ENCODE measurements at regions of chr9 and their contacts with region 1.

Region 1: DNA sequence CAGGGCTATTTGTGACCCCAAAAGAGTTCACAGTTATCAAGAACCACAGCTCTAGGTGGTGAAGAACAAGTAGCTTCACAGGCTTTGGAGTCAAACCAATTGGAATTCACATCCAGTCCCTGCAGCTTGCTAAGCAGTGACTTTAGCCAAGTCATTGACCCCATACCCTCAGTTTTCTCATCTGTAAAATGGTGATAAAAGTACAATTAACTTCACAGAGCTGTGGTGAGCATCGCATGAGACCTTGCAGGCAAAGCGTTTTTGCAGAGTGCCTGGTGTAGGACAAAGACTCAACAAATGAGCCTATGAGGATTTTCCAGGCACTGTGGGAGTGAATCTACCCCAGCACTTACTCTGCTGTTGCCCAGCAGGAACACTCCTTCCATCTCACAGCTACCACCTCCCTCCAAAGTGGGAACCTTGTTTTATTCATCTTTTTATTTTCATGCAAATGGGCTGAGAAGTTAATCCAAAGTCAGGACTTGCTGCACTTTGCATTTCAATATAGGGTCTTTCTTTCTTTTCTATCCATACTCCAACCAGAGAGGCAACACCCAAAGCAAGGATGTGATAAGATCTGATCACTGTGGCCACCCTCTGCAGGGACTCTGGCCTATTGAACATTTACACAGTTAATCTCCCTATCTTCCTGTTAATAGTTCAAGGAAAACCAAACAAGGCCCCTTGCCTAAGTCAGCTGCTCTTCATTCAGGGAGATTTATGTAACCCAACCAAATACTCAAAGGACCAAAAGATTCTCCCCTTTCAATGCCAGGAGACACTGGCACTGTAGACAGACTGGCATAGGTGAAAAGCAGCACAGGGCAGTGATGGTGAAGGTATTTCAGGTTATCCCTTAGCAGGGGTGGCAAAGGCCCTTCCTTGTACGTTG is 41.9 kb downstream of the ABCA1 start:
- DNase-seq: peak; percentile 66 to 67
- H3K4me3 ChIP-seq: no peak overlapping the region
- H3K4me3 Mint-ChIP-seq: peak overlapping the region; percentile 56
- H3K27ac Mint-ChIP-seq: peak overlapping the region; percentile 58
- H3K4me1 ChIP-seq: peaks cover 48% of the 10 kb centered on the region
- H3K4me1 Mint-ChIP-seq: peaks cover 31% of the 10 kb centered on the region
- H3K27me3 ChIP-seq: no peaks in the 10 kb centered on the region
- H3K27me3 Mint-ChIP-seq: no peaks in the 10 kb centered on the region
- CTCF ChIP-seq: no peak

Region 2: GRCh38 chr9:104686081-104686480 is 200.0 kb before region 1 on chr9:
- CTCF ChIA-PET with region 1: no interaction called
- POLR2A ChIA-PET with region 1: no interaction called
- intact Hi-C with region 1: no loop called
- DNase-seq: no peak
- H3K4me3 ChIP-seq: no peak overlapping the region
- H3K4me3 Mint-ChIP-seq: no peak overlapping the region
- H3K27ac Mint-ChIP-seq: no peak overlapping the region
- H3K4me1 ChIP-seq: no peaks in the 10 kb centered on the region; the same call in 1 of the 2 replicates
- H3K4me1 Mint-ChIP-seq: no peaks in the 10 kb centered on the region
- H3K27me3 ChIP-seq: no peaks in the 10 kb centered on the region
- H3K27me3 Mint-ChIP-seq: no peaks in the 10 kb centered on the region
- CTCF ChIP-seq: no peak

Region 3: DNA sequence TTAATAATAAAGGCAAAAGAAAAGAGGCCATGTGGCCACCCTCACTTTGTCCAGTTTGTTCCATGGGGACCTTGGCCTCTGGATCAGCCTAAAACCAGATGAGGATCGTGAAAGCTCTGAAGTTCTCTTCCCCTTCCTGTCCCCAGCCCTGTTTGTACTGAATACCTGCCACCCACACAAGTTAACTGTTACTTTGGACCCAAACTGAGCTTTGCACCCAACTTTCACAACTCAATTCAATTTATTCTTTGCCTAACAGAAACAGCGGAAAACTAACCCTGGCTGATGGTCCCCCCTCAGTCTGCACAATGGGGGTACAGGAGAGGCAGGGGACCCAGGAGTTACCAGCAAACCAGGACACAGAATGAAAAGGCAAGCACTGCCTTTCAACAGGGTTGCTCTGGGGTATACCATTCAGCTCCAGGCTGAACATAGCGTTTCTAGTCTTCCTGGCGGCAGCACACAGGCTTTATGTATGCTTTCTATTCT is 13.7 kb after region 1 on chr9:
- CTCF ChIA-PET with region 1: no interaction called
- POLR2A ChIA-PET with region 1: no interaction called
- intact Hi-C with region 1: loop called (anchors 1 kb)
- DNase-seq: no peak
- H3K4me3 ChIP-seq: no peak overlapping the region
- H3K4me3 Mint-ChIP-seq: no peak overlapping the region
- H3K27ac Mint-ChIP-seq: peak overlapping the region; percentile 39
- H3K4me1 ChIP-seq: peaks cover 14% of the 10 kb centered on the region; the same call in 1 of the 2 replicates
- H3K4me1 Mint-ChIP-seq: no peaks in the 10 kb centered on the region
- H3K27me3 ChIP-seq: no peaks in the 10 kb centered on the region
- H3K27me3 Mint-ChIP-seq: no peaks in the 10 kb centered on the region
- CTCF ChIP-seq: no peak

Region 4: GRCh38 chr9:104911032-104911607 is 25.1 kb after region 1 on chr9:
- CTCF ChIA-PET with region 1: no interaction called
- POLR2A ChIA-PET with region 1: no interaction called
- intact Hi-C with region 1: loop called (anchors 1 kb)
- DNase-seq: no peak
- H3K4me3 ChIP-seq: no peak overlapping the region
- H3K4me3 Mint-ChIP-seq: no peak overlapping the region
- H3K27ac Mint-ChIP-seq: no peak overlapping the region
- H3K4me1 ChIP-seq: peaks cover 40% of the 10 kb centered on the region
- H3K4me1 Mint-ChIP-seq: peaks cover 43% of the 10 kb centered on the region
- H3K27me3 ChIP-seq: no peaks in the 10 kb centered on the region
- H3K27me3 Mint-ChIP-seq: no peaks in the 10 kb centered on the region
- CTCF ChIP-seq: no peak